Endothelial cell of umbilical vein (primary cell): ENCODE measurements at regions of chr11 and their contacts with region 1.

Region 1: DNA sequence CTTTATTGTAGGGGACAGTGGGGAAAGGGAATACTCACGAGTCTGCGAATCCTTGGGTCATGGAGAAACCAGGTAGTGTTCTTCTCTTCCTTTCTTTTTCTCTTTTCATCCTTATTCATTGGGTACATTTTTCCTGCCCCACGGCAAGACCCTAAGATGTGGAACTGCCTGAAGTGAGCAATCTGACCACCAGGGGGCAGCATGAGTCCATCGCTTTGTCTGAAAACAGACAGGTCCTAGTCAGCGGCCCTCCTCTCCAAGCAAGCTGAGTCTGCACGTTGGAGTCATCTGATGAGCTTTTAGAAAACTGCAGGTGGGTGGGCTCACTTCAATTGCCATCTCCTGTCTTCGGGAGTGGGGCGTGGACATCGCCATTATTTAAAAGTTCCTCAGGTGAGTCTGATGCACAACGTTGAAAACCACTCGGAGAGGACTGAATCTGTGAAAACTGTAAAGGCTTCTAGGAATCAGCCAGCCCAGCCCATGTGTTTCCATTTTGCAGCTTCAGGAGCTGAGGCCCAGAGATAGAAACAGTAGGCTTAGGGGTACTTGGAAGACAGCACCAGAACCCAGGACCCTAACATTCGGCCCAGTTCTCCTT is 34.0 kb upstream of the FBXO3 start:
- DNase-seq: peak; percentile 83
- H3K4me3 ChIP-seq: no peak overlapping the region
- H3K27ac ChIP-seq: no peak overlapping the region
- H3K4me1 ChIP-seq: peaks cover 9% of the 10 kb centered on the region
- H3K27me3 ChIP-seq: peaks cover 0 to 5% of the 10 kb centered on the region in 2 experiments
- CTCF ChIP-seq: peak; percentile 87 to 92
- POLR2A ChIP-seq: no peak

Region 2: DNA sequence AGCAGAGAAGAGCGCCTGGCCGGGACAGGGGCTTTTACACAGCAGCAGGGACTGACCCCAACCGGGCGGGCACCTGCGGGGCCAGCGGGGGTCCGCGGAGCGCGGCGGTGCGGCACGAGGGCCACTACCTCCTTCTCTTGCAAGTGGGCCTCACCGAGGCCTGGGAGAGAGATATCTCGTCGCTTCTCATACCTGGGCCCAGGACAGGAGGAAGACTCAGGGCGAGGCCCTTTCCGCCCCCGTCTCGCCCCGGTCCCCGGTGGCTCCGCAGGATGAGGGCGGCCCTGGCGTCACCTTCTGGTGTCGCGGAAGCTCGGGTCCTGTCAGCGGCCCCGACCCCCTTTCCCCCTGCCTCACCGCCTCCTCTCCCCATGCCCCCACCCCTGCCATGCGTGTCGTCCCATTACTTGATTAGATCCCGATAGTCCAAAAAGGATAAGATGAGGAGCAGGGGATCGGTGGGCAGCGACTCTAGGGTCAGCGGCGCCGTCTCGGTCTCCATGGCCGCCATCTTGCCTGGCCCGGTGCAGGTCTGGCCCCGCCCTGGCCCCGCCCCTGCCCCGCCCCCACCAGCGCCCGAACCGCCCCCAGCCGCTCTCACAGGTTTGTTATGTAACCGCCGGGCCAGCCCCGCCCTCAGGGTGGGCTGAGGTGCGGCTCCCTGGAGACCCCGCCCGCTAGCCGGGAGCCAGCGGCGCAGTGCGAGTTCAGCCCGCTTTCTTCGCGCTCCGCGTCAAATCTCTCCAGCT is 34.2 kb before region 1 on chr11 and contains the start of gene FBXO3:
- CTCF ChIA-PET with region 1: interaction called, 11 read pairs
- POLR2A ChIA-PET with region 1: no interaction called
- dilution Hi-C with region 1: no loop called
- intact Hi-C with region 1: no loop called
- DNase-seq: peak; percentile 81
- H3K4me3 ChIP-seq: peak within 1 kb of the TSS; percentile 62 to 92 (median 80)
- H3K27ac ChIP-seq: peak within 1 kb of the TSS; percentile 4
- H3K4me1 ChIP-seq: peaks cover 12% of the 10 kb centered on the region
- H3K27me3 ChIP-seq: peaks cover 19 to 22% of the 10 kb centered on the region in 2 experiments
- CTCF ChIP-seq: no peak
- POLR2A ChIP-seq: peak; percentile 71
- total RNA-seq, gene FBXO3: 20.8 and 23.1 TPM in 2 replicates

Region 3: GRCh38 chr11:33829433-33830141 is 21.3 kb after region 1 on chr11:
- CTCF ChIA-PET with region 1: interaction called, 147 read pairs
- POLR2A ChIA-PET with region 1: no interaction called
- dilution Hi-C with region 1: no loop called
- intact Hi-C with region 1: loop called (anchors 1 kb)
- DNase-seq: peak; percentile 76
- H3K4me3 ChIP-seq: peak overlapping the region; percentile 0 to 29 (median 25)
- H3K27ac ChIP-seq: no peak overlapping the region
- H3K4me1 ChIP-seq: peaks cover 4% of the 10 kb centered on the region
- H3K27me3 ChIP-seq: peaks cover 17 to 19% of the 10 kb centered on the region in 2 experiments
- CTCF ChIP-seq: peak; percentile 74 to 81
- POLR2A ChIP-seq: no peak

Region 4: GRCh38 chr11:33857933-33858371 is 49.6 kb after region 1 on chr11:
- CTCF ChIA-PET with region 1: interaction called, 5 read pairs
- POLR2A ChIA-PET with region 1: no interaction called
- dilution Hi-C with region 1: no loop called
- intact Hi-C with region 1: loop called (anchors 2 kb)
- DNase-seq: peak; percentile 85
- H3K4me3 ChIP-seq: no peak overlapping the region
- H3K27ac ChIP-seq: no peak overlapping the region
- H3K4me1 ChIP-seq: no peaks in the 10 kb centered on the region
- H3K27me3 ChIP-seq: no peaks in the 10 kb centered on the region
- CTCF ChIP-seq: peak; percentile 89 to 92
- POLR2A ChIP-seq: no peak

Region 5: GRCh38 chr11:33976495-33977199 is 168.3 kb after region 1 on chr11:
- CTCF ChIA-PET with region 1: interaction called, 35 read pairs
- POLR2A ChIA-PET with region 1: no interaction called
- dilution Hi-C with region 1: no loop called
- intact Hi-C with region 1: loop called (anchors 1 kb)
- DNase-seq: no peak
- H3K4me3 ChIP-seq: no peak overlapping the region
- H3K27ac ChIP-seq: no peak overlapping the region
- H3K4me1 ChIP-seq: no peaks in the 10 kb centered on the region
- H3K27me3 ChIP-seq: peaks cover 0 to 7% of the 10 kb centered on the region in 2 experiments
- CTCF ChIP-seq: no peak
- POLR2A ChIP-seq: no peak

Region 6: DNA sequence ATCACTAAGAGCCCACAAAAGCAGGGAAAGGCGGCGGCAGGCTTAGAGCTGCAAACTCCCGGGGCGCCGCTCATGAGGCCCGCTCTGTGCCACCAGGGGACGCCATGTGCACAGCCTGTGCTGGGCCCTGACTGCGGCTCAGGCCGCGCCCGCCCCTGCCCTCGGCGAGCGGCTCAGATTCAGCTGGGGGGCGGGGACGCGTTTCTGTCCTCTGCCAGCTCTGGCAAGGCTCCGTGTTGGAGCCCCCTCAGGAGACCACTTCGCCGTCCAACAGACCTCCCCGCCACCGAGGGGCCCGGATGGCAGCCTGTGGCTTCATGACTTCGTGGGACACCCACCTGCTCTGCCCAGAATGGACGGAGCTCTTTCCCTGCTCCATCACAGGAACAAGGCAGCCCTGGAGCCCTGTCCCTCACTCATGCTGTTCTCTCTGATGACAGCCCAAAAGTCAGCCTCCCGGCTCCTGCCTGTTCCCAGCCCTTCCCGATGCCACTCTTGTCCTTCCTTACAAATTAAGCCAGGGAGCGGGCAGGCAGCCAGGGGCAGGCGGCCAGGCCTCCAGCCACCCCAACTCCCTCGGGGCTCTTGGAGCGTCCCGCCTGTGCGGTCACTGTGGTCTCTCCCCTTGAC is 366.2 kb after region 1 on chr11:
- CTCF ChIA-PET with region 1: interaction called, 10 read pairs
- POLR2A ChIA-PET with region 1: no interaction called
- dilution Hi-C with region 1: no loop called
- intact Hi-C with region 1: no loop called
- DNase-seq: peak; percentile 55
- H3K4me3 ChIP-seq: no peak overlapping the region
- H3K27ac ChIP-seq: no peak overlapping the region
- H3K4me1 ChIP-seq: peaks cover 3% of the 10 kb centered on the region
- H3K27me3 ChIP-seq: peaks cover 3 to 5% of the 10 kb centered on the region in 2 experiments
- CTCF ChIP-seq: peak; percentile 78 to 99
- POLR2A ChIP-seq: no peak